ENCODE measurements at regions of chr18 and their contacts with region 1.

Region 1: GRCh38 chr18:34352385-34353163 is 127.9 kb upstream of the NOL4 start:
- DNase-seq: peak; percentile 22
- ATAC-seq: no peak
- H3K4me3 ChIP-seq: no peak overlapping the region
- H3K27ac ChIP-seq: no peak overlapping the region
- H3K4me1 ChIP-seq: no peaks in the 10 kb centered on the region
- H3K27me3 ChIP-seq: no peaks in the 10 kb centered on the region
- CTCF ChIP-seq: peak; percentile 39
- EP300 ChIP-seq: no peak
- POLR2A ChIP-seq: no peak
- RAD21 ChIP-seq: no peak

Region 2: DNA sequence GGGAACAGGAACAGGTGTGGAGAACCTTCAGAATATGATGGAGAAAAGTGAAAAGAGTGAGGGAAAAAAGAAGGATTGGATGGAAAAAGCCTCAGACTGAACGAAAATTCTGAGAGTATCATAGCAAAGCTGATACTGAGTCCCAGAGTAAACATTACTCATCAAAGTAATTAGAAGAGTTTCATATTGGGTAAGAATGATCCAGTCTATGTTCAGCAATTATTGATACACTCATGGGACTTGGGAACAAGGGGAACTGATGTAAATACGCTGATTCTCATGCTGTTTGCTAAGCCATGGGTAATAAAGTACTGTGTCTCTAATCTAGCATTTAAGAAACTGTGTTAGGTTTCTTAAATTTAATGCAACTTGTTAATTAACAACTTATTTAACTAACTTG is 92.0 kb after region 1 on chr18:
- CTCF ChIA-PET with region 1: no interaction called
- POLR2A ChIA-PET with region 1: no interaction called
- in situ Hi-C with region 1: no loop called
- intact Hi-C with region 1: loop called (anchors 2 kb)
- DNase-seq: no peak
- ATAC-seq: no peak
- H3K4me3 ChIP-seq: no peak overlapping the region
- H3K27ac ChIP-seq: no peak overlapping the region
- H3K4me1 ChIP-seq: no peaks in the 10 kb centered on the region
- H3K27me3 ChIP-seq: no peaks in the 10 kb centered on the region
- CTCF ChIP-seq: no peak
- EP300 ChIP-seq: no peak
- POLR2A ChIP-seq: no peak
- RAD21 ChIP-seq: no peak

Region 3: DNA sequence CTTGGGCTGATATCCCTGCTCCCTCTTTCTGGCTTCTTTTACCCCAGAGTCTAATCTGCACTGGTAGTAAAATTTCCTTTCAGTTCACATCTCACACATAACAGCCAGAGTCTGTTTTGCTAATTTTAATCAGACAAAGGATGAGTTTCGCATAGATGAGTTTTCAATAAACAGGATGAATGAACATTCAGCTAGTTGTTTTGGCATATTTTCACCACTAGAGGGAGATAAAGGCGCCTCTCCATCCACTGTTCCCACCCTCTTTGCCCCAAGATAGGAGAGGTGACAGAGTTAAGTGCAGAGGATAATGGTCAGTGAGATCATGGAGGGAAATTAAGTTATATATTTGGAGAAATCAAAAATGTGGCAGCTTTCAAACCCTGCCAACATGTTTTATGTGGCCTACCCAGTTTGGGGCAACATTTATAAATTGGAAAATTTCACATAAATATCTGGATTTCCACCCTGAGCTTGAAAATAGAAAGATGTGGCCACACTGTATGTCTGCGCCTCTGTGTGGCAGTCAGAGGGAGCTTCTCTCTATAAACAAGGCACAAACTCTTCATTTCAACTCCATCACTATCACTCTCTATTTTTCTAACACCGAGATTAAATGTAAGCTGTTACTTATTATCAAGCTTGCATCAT is 309.0 kb after region 1 on chr18:
- CTCF ChIA-PET with region 1: no interaction called
- POLR2A ChIA-PET with region 1: no interaction called
- in situ Hi-C with region 1: no loop called
- intact Hi-C with region 1: loop called (anchors 1 kb)
- DNase-seq: peak; percentile 48
- ATAC-seq: peak; percentile 90
- H3K4me3 ChIP-seq: no peak overlapping the region
- H3K27ac ChIP-seq: no peak overlapping the region
- H3K4me1 ChIP-seq: peaks cover 11% of the 10 kb centered on the region
- H3K27me3 ChIP-seq: no peaks in the 10 kb centered on the region
- CTCF ChIP-seq: peak; percentile 73
- EP300 ChIP-seq: no peak
- POLR2A ChIP-seq: no peak
- RAD21 ChIP-seq: no peak; the same call in 1 of the 2 replicates

Region 4: GRCh38 chr18:34723143-34723542 is 370.6 kb after region 1 on chr18:
- CTCF ChIA-PET with region 1: no interaction called
- POLR2A ChIA-PET with region 1: no interaction called
- in situ Hi-C with region 1: no loop called
- intact Hi-C with region 1: loop called (anchors 5 kb)
- DNase-seq: peak; percentile 14
- ATAC-seq: no peak
- H3K4me3 ChIP-seq: no peak overlapping the region
- H3K27ac ChIP-seq: no peak overlapping the region
- H3K4me1 ChIP-seq: no peaks in the 10 kb centered on the region; the same call in 1 of the 2 replicates
- H3K27me3 ChIP-seq: no peaks in the 10 kb centered on the region
- CTCF ChIP-seq: no peak
- EP300 ChIP-seq: no peak
- POLR2A ChIP-seq: no peak
- RAD21 ChIP-seq: no peak